Activated naive CD4-positive, alpha-beta T cell treated with anti-CD3 and anti-CD28 coated beads for 36 hours (primary cell): ENCODE measurements at regions of chr13 and their contacts with region 1.

Region 1: GRCh38 chr13:99356158-99357091 is 49.2 kb upstream of the GPR183 start:
- DNase-seq: peak; percentile 70
- H3K4me3 Mint-ChIP-seq: peak overlapping the region; percentile 58
- H3K27ac Mint-ChIP-seq: peak overlapping the region; percentile 93
- H3K4me1 Mint-ChIP-seq: peaks cover 97% of the 10 kb centered on the region
- H3K27me3 Mint-ChIP-seq: no peaks in the 10 kb centered on the region

Region 2: DNA sequence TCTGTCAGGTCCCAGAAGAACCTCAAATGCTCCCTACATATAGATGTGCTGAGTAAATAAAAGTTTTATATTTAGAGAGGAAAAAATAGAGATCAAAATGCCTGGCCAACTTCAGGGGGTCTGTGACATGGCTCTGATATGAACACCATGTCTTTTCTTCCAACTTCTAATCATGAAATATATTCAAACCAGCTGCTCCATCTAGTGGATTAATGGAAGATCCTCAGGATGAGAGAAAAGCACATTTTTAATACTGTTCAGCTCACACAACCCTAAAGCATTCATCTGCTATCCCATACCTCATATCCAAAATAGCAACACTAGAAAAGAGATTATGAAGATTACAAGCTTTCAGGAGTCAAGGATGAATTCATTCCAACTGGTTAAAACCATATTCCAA is 322.6 kb before region 1 on chr13:
- CTCF ChIA-PET with region 1: no interaction called
- intact Hi-C with region 1: loop called (anchors 5 kb)
- DNase-seq: no peak
- H3K4me3 Mint-ChIP-seq: no peak overlapping the region
- H3K27ac Mint-ChIP-seq: no peak overlapping the region
- H3K4me1 Mint-ChIP-seq: peaks cover 45% of the 10 kb centered on the region
- H3K27me3 Mint-ChIP-seq: no peaks in the 10 kb centered on the region

Region 3: GRCh38 chr13:99214232-99214631 is 142.2 kb before region 1 on chr13:
- CTCF ChIA-PET with region 1: no interaction called
- intact Hi-C with region 1: loop called (anchors 2 kb)
- DNase-seq: peak; percentile 83
- H3K4me3 Mint-ChIP-seq: peak overlapping the region; percentile 72
- H3K27ac Mint-ChIP-seq: peak overlapping the region; percentile 78
- H3K4me1 Mint-ChIP-seq: peaks cover 82% of the 10 kb centered on the region
- H3K27me3 Mint-ChIP-seq: no peaks in the 10 kb centered on the region

Region 4: GRCh38 chr13:99296398-99296797 is 60.0 kb before region 1 on chr13:
- CTCF ChIA-PET with region 1: interaction called, 7 read pairs
- intact Hi-C with region 1: loop called (anchors 1 kb)
- DNase-seq: no peak
- H3K4me3 Mint-ChIP-seq: peak overlapping the region; percentile 48
- H3K27ac Mint-ChIP-seq: peak overlapping the region; percentile 87
- H3K4me1 Mint-ChIP-seq: peaks cover 75% of the 10 kb centered on the region
- H3K27me3 Mint-ChIP-seq: no peaks in the 10 kb centered on the region

Region 5: DNA sequence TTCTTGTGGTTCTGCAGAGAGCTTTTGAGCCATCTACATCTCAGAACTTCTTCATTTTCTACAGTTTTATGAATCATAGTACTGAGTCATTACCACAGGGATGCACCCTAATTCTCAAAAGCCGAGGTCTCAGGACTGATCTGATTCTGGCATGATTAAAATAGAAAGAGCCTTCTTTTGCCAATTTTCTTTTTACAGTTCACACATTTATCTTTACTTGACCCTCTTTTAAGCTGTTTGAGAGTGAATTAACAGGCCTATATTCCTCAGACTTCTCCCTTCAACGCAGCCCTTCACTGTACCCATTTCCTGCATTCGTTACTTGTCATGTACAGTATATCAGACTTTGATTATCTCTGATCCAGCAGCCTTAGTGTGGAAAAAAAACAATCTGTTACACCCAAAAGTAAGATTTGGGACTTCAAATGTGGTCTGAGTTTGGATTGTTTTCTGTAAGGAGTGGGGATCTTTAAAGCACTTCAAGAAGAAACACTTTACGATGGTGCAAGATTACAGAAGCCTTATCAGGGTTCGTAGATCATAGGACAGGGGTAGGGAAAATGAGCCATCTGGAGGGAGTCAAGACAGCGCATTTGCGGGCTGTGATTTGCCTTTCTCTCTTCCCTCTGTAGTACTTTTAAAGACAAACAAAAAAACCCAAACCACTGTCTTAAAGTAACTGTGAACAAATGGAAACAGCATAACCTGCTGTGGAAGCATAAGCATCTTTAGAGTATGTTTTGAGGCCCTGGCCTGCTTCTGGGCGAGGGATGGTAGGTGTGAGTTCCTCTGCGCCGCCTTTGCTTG is 33.9 kb before region 1 on chr13:
- CTCF ChIA-PET with region 1: interaction called, 15 read pairs
- intact Hi-C with region 1: loop called (anchors 1 kb)
- DNase-seq: peak; percentile 63
- H3K4me3 Mint-ChIP-seq: peak overlapping the region; percentile 56
- H3K27ac Mint-ChIP-seq: peak overlapping the region; percentile 87
- H3K4me1 Mint-ChIP-seq: peaks cover 75% of the 10 kb centered on the region
- H3K27me3 Mint-ChIP-seq: no peaks in the 10 kb centered on the region

Region 6: DNA sequence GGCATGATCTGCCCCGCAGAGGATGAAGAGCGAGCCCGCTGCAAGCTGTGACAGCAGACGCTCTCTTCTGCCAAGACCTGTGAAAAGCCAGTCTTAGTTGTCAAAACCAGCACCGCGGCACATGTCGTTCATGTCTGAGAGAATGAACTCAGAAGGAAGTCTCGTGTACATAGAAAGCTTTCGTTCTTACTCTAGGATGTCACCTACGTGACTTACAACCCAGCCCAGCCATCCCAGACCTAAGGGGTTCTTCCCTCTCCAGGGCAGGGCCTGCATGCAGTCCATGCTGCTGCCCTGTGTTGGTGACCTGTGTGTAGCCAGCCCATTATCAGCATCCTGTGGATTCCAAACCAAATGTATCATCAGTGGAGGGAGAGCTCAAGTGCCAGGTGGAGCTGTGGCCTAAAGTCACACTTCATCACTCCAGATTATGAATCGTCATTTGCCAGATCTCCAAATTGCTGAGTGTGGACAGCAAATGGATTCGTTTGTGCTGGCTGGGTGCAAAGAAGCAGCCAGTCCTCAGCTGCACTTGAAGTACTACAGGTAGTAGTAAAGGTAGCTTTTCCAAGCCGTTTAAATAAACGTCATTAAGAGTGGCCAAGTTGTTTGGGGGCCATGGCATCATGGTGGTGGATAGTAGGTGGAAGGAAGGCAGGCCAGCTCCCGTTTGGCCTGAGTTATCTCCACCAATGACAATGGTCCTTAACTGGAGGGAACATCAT is 24.7 kb after region 1 on chr13:
- CTCF ChIA-PET with region 1: interaction called, 5 read pairs
- intact Hi-C with region 1: loop called (anchors 1 kb)
- DNase-seq: peak; percentile 91
- H3K4me3 Mint-ChIP-seq: no peak overlapping the region
- H3K27ac Mint-ChIP-seq: peak overlapping the region; percentile 79
- H3K4me1 Mint-ChIP-seq: peaks cover 84% of the 10 kb centered on the region
- H3K27me3 Mint-ChIP-seq: no peaks in the 10 kb centered on the region